ENCODE measurements at regions of chr2 and their contacts with region 1.

Region 1: GRCh38 chr2:208101716-208102631 is 22.4 kb downstream of the CRYGD start:
- DNase-seq: peak in 1 of 2 experiments; percentile 42
- H3K4me3 ChIP-seq: no peak overlapping the region
- H3K27ac ChIP-seq: no peak overlapping the region
- H3K4me1 ChIP-seq: peaks cover 2 to 6% (median 2%) of the 10 kb centered on the region in 4 experiments; a peak in 4 of 7 replicates
- H3K27me3 ChIP-seq: no peaks in the 10 kb centered on the region; a peak in 1 of 7 replicates
- CTCF ChIP-seq: peak in 2 of 3 experiments; percentile 53 to 59; a peak in 2 of 4 replicates
- EP300 ChIP-seq: no peak
- POLR2A ChIP-seq: no peak
- RAD21 ChIP-seq: peak; percentile 83 to 84

Region 2: DNA sequence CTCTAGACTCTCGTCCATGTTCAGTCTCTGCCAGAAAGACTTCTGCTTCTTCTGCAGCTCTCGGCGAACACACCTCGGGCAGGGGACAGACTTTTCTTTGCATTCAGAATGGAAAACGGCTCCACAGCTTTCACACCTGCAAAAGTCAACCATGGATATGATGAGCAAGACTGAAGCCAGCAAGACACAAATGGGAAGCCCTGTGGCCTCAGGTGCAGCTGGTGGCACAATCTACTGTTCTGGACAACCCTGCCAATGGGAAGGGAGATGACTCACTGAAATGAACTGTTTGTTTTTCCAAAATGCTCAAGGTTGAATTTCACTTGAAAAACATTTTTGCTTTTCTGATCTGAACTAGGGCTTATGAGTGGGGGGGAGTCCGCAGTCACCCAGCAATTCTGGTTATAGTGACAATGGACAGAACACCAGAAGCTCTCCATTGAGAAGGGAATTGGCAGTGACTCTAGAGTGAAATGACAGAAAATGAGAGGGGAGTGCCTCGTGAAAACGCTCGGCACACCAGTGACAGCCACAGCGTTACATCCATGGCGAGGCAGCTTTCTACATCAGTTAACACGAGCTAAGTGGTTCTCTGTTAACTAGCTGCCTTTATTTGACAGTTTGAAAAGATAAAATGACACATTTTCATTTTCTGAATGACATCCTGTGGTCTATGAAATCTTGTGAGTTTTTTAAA is 273.5 kb before region 1 on chr2:
- CTCF ChIA-PET with region 1: no interaction called
- POLR2A ChIA-PET with region 1: no interaction called
- DNase-seq: no peak
- H3K4me3 ChIP-seq: no peak overlapping the region
- H3K27ac ChIP-seq: no peak overlapping the region
- H3K4me1 ChIP-seq: no peaks in the 10 kb centered on the region; a peak in 1 of 7 replicates
- H3K27me3 ChIP-seq: no peaks in the 10 kb centered on the region
- CTCF ChIP-seq: no peak
- EP300 ChIP-seq: no peak
- POLR2A ChIP-seq: no peak
- RAD21 ChIP-seq: no peak

Region 3: DNA sequence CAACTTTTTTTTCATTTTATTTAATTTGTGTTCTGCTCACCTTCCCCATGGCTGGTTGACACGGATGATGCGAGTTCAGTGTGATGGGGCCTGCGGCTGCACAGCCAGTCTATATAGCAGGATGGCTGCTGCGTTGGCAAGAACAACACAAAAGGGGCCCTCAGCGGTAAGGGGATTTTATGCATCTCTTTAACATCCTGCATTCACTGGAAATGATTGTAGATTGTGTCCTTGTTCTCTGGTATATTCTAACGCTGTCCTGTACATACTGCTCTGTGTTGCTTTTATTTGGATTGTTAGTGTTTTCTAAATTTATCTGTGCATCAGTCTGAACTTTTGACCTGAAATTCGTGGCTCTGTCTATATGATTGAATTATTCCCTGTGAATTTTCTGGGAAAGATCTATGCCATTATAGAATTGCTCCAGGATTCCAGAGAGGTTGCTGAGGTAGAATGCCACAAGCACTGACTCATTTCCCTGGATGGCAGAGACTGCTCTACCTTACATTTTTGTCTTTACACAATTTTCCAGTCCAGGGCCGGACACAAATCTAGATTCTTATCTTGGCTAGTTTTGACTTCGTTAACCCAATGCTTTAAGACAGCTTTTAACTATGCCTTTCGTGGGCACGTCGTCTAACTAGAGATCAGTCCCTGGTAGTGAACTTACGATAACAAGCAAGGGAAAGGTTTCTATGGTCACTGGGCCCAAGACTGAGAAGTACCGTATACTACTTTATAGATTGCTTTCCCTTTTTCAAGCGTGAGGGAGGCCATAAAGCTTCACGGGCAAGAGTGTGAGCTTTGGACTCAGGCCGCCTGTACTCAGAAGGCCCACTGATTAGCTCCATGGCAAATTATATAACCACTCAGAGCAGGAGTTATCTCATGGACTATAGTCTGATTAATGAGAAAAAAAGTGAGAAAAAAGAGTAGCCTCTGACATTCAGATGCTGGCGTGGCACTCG is 28.1 kb after region 1 on chr2 and contains the start of gene CRYGC:
- CTCF ChIA-PET with region 1: interaction called, 10 read pairs
- POLR2A ChIA-PET with region 1: no interaction called
- DNase-seq: no peak
- H3K4me3 ChIP-seq: no peak within 1 kb of the TSS
- H3K27ac ChIP-seq: no peak within 1 kb of the TSS
- H3K4me1 ChIP-seq: no peaks in the 10 kb centered on the region
- H3K27me3 ChIP-seq: no peaks in the 10 kb centered on the region
- CTCF ChIP-seq: no peak
- EP300 ChIP-seq: no peak
- POLR2A ChIP-seq: no peak
- RAD21 ChIP-seq: no peak
- total RNA-seq, gene CRYGC: not detected in 2 replicates

Region 4: GRCh38 chr2:208142240-208142924 is 40.4 kb after region 1 on chr2:
- CTCF ChIA-PET with region 1: interaction called, 33 read pairs
- POLR2A ChIA-PET with region 1: no interaction called
- DNase-seq: no peak
- H3K4me3 ChIP-seq: no peak overlapping the region
- H3K27ac ChIP-seq: no peak overlapping the region
- H3K4me1 ChIP-seq: 0 out of 7 replicates have a peak, but pooled peaks cover 0 to 3% (median 0%) of the 10 kb centered on the region in 4 experiments
- H3K27me3 ChIP-seq: no peaks in the 10 kb centered on the region; a peak in 1 of 7 replicates
- CTCF ChIP-seq: no peak
- EP300 ChIP-seq: no peak
- POLR2A ChIP-seq: no peak
- RAD21 ChIP-seq: no peak

Region 5: DNA sequence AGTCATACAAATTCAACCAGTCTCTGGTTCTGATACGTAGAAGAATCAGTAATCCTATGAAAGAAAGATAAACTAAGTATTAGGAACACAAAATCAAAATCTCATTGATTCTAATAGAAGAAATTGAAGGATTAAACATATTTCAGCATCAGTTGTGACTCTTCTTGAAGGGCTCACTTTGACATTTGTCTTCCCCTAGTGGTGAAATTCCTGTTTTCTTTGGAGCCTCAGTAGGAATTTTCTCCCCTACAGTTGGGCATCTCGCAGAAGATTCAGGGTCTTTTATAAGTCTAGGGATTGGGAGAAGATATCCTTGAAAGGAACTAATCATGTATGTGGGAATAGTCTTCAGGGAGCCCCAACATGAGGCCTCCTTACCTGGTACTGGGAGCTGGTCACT is 46.8 kb after region 1 on chr2:
- CTCF ChIA-PET with region 1: interaction called, 33 read pairs
- POLR2A ChIA-PET with region 1: no interaction called
- DNase-seq: no peak
- H3K4me3 ChIP-seq: no peak overlapping the region
- H3K27ac ChIP-seq: no peak overlapping the region
- H3K4me1 ChIP-seq: 0 out of 7 replicates have a peak, but pooled peaks cover 0 to 3% (median 0%) of the 10 kb centered on the region in 4 experiments
- H3K27me3 ChIP-seq: no peaks in the 10 kb centered on the region; a peak in 1 of 7 replicates
- CTCF ChIP-seq: peak in 2 of 3 experiments; percentile 43 to 50; a peak in 2 of 4 replicates
- EP300 ChIP-seq: no peak
- POLR2A ChIP-seq: no peak
- RAD21 ChIP-seq: peak; percentile 33 to 43; a peak in 3 of 4 replicates

Region 6: GRCh38 chr2:208254871-208255556 is 153.0 kb after region 1 on chr2 and contains the start of gene IDH1:
- CTCF ChIA-PET with region 1: interaction called, 34 read pairs
- POLR2A ChIA-PET with region 1: interaction called, 11 read pairs
- DNase-seq: peak; percentile 83 to 100
- H3K4me3 ChIP-seq: peak within 1 kb of the TSS; percentile 85 to 100 (median 99)
- H3K27ac ChIP-seq: peak within 1 kb of the TSS; percentile 82
- H3K4me1 ChIP-seq: peaks cover 0 to 5% (median 3%) of the 10 kb centered on the region in 4 experiments; a peak in 2 of 7 replicates
- H3K27me3 ChIP-seq: no peaks in the 10 kb centered on the region
- CTCF ChIP-seq: peak; percentile 50 to 57 (median 52); a peak in 3 of 4 replicates
- EP300 ChIP-seq: no peak
- POLR2A ChIP-seq: peak; percentile 38 to 62; a peak in 2 of 3 replicates
- RAD21 ChIP-seq: peak; percentile 46 to 48
- total RNA-seq, gene IDH1: 379 and 398 TPM in 2 replicates

Region 7: GRCh38 chr2:208265801-208266552 is 164.0 kb after region 1 on chr2 and contains the start of gene PIKFYVE:
- CTCF ChIA-PET with region 1: interaction called, 32 read pairs
- POLR2A ChIA-PET with region 1: no interaction called
- DNase-seq: peak; percentile 92 to 93
- H3K4me3 ChIP-seq: peak within 1 kb of the TSS; percentile 85 to 87 (median 86)
- H3K27ac ChIP-seq: peak within 1 kb of the TSS; percentile 50
- H3K4me1 ChIP-seq: peaks cover 0 to 8% (median 4%) of the 10 kb centered on the region in 4 experiments; a peak in 5 of 7 replicates
- H3K27me3 ChIP-seq: no peaks in the 10 kb centered on the region
- CTCF ChIP-seq: no peak
- EP300 ChIP-seq: peak in 1 of 2 experiments; percentile 56; a peak in 1 of 3 replicates
- POLR2A ChIP-seq: peak; percentile 52 to 64
- RAD21 ChIP-seq: no peak
- total RNA-seq, gene PIKFYVE: 33.5 and 35.8 TPM in 2 replicates